PC-9 (cell line): ENCODE measurements at regions of chr1 and their contacts with region 1.

Region 1: GRCh38 chr1:19762175-19762779 is 37.4 kb downstream of the TMCO4 start:
- DNase-seq: peak in 1 of 2 experiments; percentile 28
- H3K4me3 ChIP-seq: no peak overlapping the region
- H3K27ac ChIP-seq: no peak overlapping the region
- H3K4me1 ChIP-seq: peaks cover 18% of the 10 kb centered on the region
- H3K27me3 ChIP-seq: no peaks in the 10 kb centered on the region
- CTCF ChIP-seq: peak; percentile 70

Region 2: GRCh38 chr1:19622204-19622603 is 140.1 kb before region 1 on chr1:
- CTCF ChIA-PET with region 1: no interaction called
- POLR2A ChIA-PET with region 1: no interaction called
- intact Hi-C with region 1: no loop called
- DNase-seq: no peak
- H3K4me3 ChIP-seq: no peak overlapping the region
- H3K27ac ChIP-seq: no peak overlapping the region
- H3K4me1 ChIP-seq: no peaks in the 10 kb centered on the region
- H3K27me3 ChIP-seq: no peaks in the 10 kb centered on the region
- CTCF ChIP-seq: no peak

Region 3: GRCh38 chr1:19882111-19883071 is 120.1 kb after region 1 on chr1 and contains the start of gene OTUD3:
- CTCF ChIA-PET with region 1: no interaction called
- POLR2A ChIA-PET with region 1: no interaction called
- intact Hi-C with region 1: loop called (anchors 1 kb)
- DNase-seq: peak; percentile 82 to 92
- H3K4me3 ChIP-seq: peak within 1 kb of the TSS; percentile 94
- H3K27ac ChIP-seq: peak within 1 kb of the TSS; percentile 61; the same call in 1 of the 2 replicates
- H3K4me1 ChIP-seq: peaks cover 19% of the 10 kb centered on the region
- H3K27me3 ChIP-seq: no peaks in the 10 kb centered on the region
- CTCF ChIP-seq: peak; percentile 82
- total RNA-seq, gene OTUD3: 8.5 and 9.7 TPM in 2 replicates